GM10248 (cell line): ENCODE measurements at regions of chr2 and their contacts with region 1.

Region 1: GRCh38 chr2:177164584-177165052 is 48.0 kb upstream of the HNRNPA3 start:
- DNase-seq: peak; percentile 63
- CTCF ChIP-seq: peak; percentile 99

Region 2: DNA sequence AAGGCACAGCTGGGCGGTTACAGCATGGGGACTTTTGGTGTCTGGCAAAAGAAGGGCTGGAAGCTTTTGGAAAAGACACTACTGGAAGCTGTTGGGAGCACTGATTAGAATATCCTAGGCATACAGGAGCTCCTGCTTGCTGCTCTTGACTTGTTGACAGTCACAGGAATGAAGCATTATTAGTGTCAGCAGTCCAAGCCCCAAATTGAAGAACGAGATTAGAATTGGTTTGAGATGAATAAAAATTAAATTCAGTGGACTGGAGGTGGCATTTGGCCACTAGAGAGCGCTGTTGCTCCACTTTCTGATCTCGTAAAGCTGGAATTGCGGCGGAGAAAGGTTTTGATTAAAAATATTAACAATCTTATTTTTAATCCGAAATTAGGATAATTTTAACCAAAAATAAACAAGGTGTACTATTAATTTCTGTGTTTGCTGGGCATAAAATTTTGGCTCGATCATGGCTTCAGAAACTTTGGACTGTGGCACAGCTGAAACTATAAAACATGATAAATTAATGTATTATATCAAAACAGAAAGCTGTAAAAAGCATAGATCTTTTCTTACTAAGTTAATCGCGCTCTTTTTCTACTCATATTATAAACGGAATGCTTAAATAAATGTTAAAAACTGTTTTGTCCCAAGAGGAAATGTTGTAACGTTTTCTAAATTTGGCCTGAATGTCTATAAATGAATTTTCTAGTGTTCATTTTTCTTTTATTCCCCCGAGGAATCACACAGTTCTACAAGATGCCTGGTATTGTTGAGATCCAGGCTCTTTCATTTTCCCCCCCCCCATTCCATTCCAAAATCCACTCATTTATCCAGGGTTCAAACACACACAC is 1037.5 kb before region 1 on chr2:
- CTCF ChIA-PET with region 1: interaction called, 14 read pairs
- POLR2A ChIA-PET with region 1: no interaction called
- DNase-seq: peak; percentile 50
- CTCF ChIP-seq: peak; percentile 79

Region 3: GRCh38 chr2:177195194-177195593 is 30.6 kb after region 1 on chr2:
- CTCF ChIA-PET with region 1: interaction called, 45 read pairs
- POLR2A ChIA-PET with region 1: no interaction called
- DNase-seq: no peak
- CTCF ChIP-seq: peak; percentile 11

Region 4: DNA sequence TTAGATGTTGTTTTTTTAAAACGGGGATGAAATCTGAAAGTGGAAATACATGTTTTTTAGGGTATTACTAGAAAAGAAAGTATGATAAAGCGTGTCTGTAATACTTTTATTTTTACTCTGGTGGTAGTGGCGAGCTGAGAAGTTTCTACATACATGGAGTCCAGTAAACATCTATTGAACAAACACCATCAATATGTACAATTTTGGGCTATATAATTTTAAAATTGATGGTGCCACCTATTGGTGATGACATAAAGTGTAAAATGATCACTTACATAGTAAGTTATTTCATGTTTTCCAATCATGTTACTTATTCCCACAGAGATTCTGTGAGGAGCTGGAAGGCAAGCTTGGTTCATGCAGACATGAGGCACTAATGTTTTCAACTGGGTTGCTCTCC is 131.4 kb after region 1 on chr2:
- CTCF ChIA-PET with region 1: interaction called, 37 read pairs
- POLR2A ChIA-PET with region 1: no interaction called
- DNase-seq: peak; percentile 54
- CTCF ChIP-seq: no peak

Region 5: DNA sequence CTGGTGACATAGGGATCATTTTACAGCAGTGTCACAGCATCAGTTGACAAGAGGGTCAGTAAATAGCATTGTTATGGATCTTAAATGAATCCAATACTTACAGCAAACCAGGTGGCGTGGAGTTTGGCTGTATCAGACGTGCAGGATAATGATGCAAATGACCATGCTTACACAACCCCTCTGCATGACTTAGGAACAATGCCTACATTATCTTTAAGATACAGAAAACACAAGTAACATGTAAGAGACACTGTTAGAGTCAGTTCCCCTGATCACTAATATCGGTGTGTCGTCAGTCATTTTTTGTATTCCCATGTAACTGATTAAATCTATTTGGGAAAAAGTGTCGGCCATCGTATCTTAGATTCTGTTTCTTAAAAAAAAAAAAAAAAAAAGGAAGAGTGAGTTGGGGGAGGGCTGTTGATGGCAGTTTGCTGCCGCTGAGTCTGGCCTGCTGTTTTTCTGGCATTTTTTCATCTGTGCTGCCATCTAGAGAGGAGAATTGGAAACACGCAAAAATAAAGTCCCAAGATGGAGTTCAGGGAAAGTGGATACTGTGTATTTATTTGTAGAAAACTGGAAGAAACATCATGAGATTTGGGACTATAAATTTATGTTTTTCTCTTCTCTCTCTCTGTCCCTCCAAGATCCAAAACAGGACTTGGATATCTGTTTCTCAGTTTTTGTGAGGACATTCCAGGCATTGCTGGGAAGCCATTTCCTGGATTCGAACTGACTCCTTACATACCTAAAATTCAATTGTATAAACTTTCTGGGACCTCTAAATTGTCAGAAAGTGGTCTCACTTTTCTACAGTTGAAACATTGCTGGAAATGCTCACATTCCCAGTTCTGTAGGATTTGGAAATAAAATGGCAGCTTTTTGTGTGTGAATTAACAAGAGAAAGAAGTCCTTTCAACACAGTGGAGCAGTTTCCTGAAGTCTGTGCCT is 167.7 kb after region 1 on chr2:
- CTCF ChIA-PET with region 1: interaction called, 157 read pairs
- POLR2A ChIA-PET with region 1: no interaction called
- DNase-seq: peak; percentile 50
- CTCF ChIP-seq: peak; percentile 66

Region 6: GRCh38 chr2:177419274-177419673 is 254.7 kb after region 1 on chr2:
- CTCF ChIA-PET with region 1: interaction called, 55 read pairs
- POLR2A ChIA-PET with region 1: no interaction called
- DNase-seq: no peak
- CTCF ChIP-seq: no peak